Activated CD4-positive, alpha-beta T cell treated with anti-CD3 and anti-CD28 coated beads for 36 hours (primary cell): ENCODE measurements at regions of chr9 and their contacts with region 1.

Region 1: DNA sequence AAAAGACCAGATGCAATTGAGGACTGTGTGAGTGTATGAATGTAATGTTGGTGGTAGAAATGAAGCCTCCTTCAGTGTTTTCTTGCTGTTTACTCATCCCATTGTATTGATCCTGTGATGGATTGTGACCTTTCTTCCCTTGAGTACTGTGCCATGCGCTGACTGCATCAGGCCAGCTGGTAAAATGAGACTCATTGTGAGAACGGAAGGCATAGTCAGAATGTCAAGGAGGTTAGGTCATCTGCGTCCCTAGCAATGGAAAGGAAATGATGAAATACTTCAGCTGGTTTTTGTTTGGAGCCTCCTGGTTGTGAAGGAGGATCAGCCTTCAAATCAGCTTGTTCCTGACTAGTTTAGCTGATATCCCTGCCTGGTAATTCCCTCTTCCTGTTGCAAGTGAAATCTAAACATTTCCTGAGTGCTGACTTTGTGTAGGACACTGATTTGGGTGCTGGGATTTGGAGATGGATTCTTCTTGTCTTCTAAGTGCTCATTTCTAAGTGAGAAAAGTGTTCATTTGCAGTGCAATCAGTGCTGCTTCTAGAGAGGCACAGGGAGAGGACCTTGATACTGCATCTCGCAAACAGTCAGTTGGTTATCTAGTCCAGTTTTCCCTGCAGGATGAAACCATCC is 35.5 kb downstream of the TNFSF8 start:
- DNase-seq: peak; percentile 77
- ATAC-seq: peak; percentile 76
- H3K4me3 Mint-ChIP-seq: peak overlapping the region; percentile 14
- H3K27ac Mint-ChIP-seq: peak overlapping the region; percentile 90
- H3K4me1 Mint-ChIP-seq: peaks cover 21% of the 10 kb centered on the region
- H3K27me3 Mint-ChIP-seq: no peaks in the 10 kb centered on the region

Region 2: DNA sequence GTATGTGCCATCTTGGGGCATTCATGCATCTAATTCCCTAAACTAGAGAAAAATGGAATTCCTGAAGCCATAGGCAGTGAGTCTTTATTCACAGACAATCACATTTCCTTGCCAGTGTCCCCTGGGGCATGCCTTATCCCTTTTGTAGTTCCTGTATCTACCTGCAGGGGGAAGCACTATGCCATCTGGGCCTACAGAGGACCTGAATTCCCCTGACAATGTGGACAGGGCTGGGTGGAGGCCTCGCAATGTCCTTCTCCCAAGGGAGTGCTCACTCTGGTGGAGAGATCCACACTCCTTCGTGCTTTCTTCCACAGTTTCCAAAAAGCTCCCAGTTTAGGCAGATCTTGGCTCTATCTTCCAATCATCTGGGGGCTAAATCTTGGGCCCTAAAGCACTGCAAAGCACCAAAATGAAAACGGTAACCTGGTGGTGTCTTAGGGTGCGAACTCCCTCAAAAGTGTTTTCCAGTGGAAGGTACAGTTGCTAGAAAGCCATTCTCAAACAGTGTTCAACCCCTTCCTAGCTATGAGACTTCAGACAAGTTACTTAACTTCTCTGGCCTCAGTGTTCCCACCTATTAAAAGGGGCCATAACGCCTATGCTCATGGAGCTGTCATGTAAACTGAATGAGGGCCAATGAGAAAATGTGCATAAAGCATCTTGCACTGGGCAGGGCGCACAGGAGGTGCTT is 407.2 kb before region 1 on chr9:
- CTCF ChIA-PET with region 1: no interaction called
- POLR2A ChIA-PET with region 1: no interaction called
- intact Hi-C with region 1: loop called in 1 of 2 experiments (anchors 5 kb)
- DNase-seq: peak; percentile 72
- ATAC-seq: peak; percentile 63
- H3K4me3 Mint-ChIP-seq: no peak overlapping the region
- H3K27ac Mint-ChIP-seq: no peak overlapping the region
- H3K4me1 Mint-ChIP-seq: peaks cover 25% of the 10 kb centered on the region
- H3K27me3 Mint-ChIP-seq: no peaks in the 10 kb centered on the region

Region 3: DNA sequence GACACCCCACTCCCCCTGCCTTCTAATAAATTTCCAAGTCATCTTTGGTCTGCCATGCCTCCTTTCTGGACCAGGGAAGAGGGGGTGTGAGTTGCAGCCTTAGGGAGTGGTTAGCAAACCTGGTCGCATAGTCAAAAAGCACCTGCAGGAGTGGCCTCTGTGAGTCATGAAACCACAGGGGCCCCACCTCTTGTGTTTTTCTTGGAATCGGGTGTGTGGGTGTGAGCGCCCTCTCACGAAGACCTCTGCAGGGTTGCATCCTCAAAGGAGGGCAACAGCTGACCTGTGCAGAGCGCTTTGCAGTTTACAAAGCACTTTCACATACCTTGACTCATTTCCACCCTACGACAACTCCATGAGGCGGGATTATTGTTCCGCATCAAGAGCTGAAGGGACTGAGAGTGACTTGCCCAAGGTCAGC is 176.1 kb before region 1 on chr9:
- CTCF ChIA-PET with region 1: no interaction called
- POLR2A ChIA-PET with region 1: interaction called, 3 read pairs
- intact Hi-C with region 1: loop called in 1 of 2 experiments (anchors 2 kb)
- DNase-seq: peak; percentile 95
- ATAC-seq: peak; percentile 94
- H3K4me3 Mint-ChIP-seq: peak overlapping the region; percentile 15
- H3K27ac Mint-ChIP-seq: peak overlapping the region; percentile 96
- H3K4me1 Mint-ChIP-seq: peaks cover 56% of the 10 kb centered on the region
- H3K27me3 Mint-ChIP-seq: peaks cover 2% of the 10 kb centered on the region

Region 4: GRCh38 chr9:114829574-114830440 is 65.1 kb before region 1 on chr9:
- CTCF ChIA-PET with region 1: no interaction called
- POLR2A ChIA-PET with region 1: no interaction called
- intact Hi-C with region 1: loop called in 1 of 2 experiments (anchors 5 kb)
- DNase-seq: no peak
- ATAC-seq: no peak
- H3K4me3 Mint-ChIP-seq: no peak overlapping the region
- H3K27ac Mint-ChIP-seq: no peak overlapping the region
- H3K4me1 Mint-ChIP-seq: peaks cover 17% of the 10 kb centered on the region
- H3K27me3 Mint-ChIP-seq: no peaks in the 10 kb centered on the region

Region 5: DNA sequence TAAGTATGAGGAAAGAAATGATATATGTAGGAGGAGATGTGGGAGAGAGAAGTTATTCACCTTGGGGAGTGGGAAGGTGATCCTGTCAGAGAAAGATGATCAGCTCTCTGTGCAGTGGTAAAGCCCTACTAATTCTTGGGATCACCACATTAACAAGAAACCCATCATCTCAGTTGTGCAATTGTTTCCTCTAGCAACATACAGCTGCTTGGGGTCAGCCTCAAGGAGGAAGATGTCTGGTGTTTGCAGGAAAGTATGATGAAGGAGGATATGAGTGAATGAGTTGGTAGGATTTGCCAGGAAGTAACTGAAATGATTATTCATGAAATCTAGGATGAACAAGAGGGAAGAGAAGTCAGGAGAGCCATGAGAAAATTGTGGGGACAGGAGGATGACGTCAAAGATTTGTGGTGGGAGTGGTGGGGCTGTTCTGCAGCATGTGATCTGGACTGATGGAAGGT is 14.6 kb before region 1 on chr9:
- CTCF ChIA-PET with region 1: no interaction called
- POLR2A ChIA-PET with region 1: no interaction called
- intact Hi-C with region 1: no loop called
- DNase-seq: no peak
- ATAC-seq: no peak
- H3K4me3 Mint-ChIP-seq: no peak overlapping the region
- H3K27ac Mint-ChIP-seq: no peak overlapping the region
- H3K4me1 Mint-ChIP-seq: peaks cover 9% of the 10 kb centered on the region
- H3K27me3 Mint-ChIP-seq: no peaks in the 10 kb centered on the region

Region 6: GRCh38 chr9:114958021-114958843 is 63.3 kb after region 1 on chr9:
- CTCF ChIA-PET with region 1: no interaction called
- POLR2A ChIA-PET with region 1: no interaction called
- intact Hi-C with region 1: loop called in 1 of 2 experiments (anchors 1 kb)
- DNase-seq: peak; percentile 68
- ATAC-seq: peak; percentile 83
- H3K4me3 Mint-ChIP-seq: peak overlapping the region; percentile 68
- H3K27ac Mint-ChIP-seq: peak overlapping the region; percentile 96
- H3K4me1 Mint-ChIP-seq: peaks cover 56% of the 10 kb centered on the region
- H3K27me3 Mint-ChIP-seq: no peaks in the 10 kb centered on the region

Region 7: GRCh38 chr9:115204904-115205453 is 310.1 kb after region 1 on chr9:
- CTCF ChIA-PET with region 1: no interaction called
- POLR2A ChIA-PET with region 1: no interaction called
- intact Hi-C with region 1: loop called (anchors 5 to 10 kb)
- DNase-seq: no peak
- ATAC-seq: peak; percentile 78
- H3K4me3 Mint-ChIP-seq: no peak overlapping the region
- H3K27ac Mint-ChIP-seq: peak overlapping the region; percentile 20
- H3K4me1 Mint-ChIP-seq: peaks cover 38% of the 10 kb centered on the region
- H3K27me3 Mint-ChIP-seq: peaks cover 32% of the 10 kb centered on the region